ENCODE measurements at regions of chr21 and their contacts with region 1.

Region 1: DNA sequence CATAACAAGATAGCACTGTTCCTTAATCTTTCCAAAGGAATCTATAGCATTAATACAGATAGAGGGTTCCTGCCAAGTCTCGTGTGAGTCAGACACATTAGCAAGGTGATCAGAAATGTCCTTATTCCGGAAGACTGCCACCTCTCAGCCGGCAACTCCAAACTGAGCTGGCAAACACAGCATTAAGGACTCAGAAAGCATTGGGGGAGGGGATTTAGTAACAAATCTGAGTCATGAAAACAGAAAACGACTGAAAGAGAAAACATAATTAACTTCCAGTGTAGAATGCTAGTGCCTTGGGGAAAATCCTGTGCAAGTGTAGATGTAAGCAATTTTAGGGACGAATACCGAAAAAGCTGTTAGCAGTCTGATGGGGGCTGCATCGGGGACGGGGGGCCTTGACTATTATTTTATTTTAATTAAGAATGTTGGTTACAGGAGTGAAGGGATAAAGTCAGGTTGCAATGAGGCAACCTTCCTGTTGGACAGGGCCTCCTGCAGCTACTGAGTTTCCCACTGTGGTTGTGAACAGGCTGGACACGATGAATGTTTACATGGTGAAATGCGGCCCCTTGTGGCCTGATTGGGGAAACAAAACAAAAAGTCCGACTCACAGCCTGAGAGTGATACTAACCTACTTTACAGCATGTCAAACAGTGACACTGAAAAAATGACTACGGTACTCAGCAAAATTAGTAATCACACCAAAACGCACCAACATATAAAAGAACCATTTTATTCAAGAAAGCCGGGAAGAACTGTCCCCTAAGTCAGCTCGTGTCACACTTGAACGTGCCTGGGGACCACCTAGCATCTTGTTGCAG is 20.7 kb downstream of the MIS18A start:
- DNase-seq: no peak
- ATAC-seq: peak; percentile 93
- H3K4me3 ChIP-seq: no peak overlapping the region
- H3K27ac ChIP-seq: no peak overlapping the region
- H3K4me1 ChIP-seq: no peaks in the 10 kb centered on the region
- H3K27me3 ChIP-seq: no peaks in the 10 kb centered on the region
- CTCF ChIP-seq: peak; percentile 62 to 90 (median 78); a peak in 5 of 6 replicates
- EP300 ChIP-seq: no peak
- POLR2A ChIP-seq: no peak
- RAD21 ChIP-seq: peak; percentile 92

Region 2: DNA sequence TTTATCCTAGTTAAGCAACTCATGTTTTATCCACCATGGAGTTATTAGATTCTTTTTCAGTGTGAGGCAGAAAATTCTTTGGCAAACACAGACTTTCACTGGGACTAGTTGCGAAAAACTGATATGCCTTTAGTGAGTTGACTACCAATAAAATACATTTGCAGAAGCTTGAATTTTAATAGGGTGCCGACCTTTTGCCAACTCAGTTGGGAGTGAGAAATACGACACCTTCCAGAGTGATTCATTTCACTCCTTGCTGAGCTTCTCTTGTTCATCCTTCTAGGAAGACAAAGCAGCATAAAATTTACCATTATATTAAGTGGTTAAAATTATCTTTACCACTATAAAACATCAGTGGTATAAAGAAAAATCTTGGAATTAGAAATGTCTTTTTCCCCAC is 1908.6 kb before region 1 on chr21:
- CTCF ChIA-PET with region 1: no interaction called
- POLR2A ChIA-PET with region 1: no interaction called
- RAD21 ChIA-PET with region 1: no interaction called
- SMC1A ChIA-PET with region 1: no interaction called
- in situ Hi-C with region 1: no loop called
- intact Hi-C with region 1: no loop called
- DNase-seq: no peak
- ATAC-seq: no peak
- H3K4me3 ChIP-seq: no peak overlapping the region
- H3K27ac ChIP-seq: no peak overlapping the region
- H3K4me1 ChIP-seq: no peaks in the 10 kb centered on the region
- H3K27me3 ChIP-seq: no peaks in the 10 kb centered on the region
- CTCF ChIP-seq: no peak
- EP300 ChIP-seq: no peak
- POLR2A ChIP-seq: no peak
- RAD21 ChIP-seq: no peak

Region 3: DNA sequence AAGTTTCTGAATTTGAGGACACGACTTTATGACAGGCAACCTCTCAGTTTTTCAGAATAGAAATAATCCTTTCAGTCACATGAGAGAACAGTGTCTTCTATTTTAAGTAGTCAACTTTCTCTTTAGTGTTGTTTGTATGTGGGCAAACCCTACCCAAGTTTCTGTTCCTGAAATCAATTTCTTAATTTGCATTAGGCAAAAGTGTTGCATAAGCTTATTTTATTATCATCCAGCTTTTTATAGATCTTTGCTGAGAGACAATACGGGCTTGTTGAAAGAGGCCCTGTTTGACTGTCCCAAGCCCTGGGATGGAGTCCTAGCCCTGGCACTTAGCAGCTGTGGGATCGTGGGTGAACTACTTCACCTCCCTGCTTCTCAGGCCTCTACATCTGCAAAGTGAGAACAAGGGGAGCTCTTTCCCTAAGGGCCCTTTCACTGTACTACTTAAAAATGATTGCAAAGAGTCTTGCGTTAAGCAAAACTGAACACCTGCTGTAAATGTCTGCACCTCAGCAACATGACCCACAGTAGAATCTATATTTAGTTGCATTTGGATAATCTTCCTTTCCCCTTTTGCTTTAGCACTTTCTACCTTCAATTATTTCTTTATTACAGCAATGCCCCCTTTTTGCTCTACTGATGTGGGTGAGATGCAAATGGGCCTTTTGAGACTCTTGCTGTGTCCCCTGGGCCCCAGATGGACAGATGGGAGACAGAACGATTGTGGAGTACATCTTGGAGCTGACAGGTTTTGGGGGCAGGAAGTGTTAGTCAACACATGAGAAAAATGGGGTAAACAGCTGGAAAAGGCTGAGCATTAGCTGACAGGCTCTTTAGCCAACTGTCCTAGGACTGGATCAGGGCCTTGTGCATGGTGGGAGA is 485.3 kb before region 1 on chr21:
- CTCF ChIA-PET with region 1: interaction called, 3 read pairs
- POLR2A ChIA-PET with region 1: no interaction called
- RAD21 ChIA-PET with region 1: interaction called, 4 read pairs
- SMC1A ChIA-PET with region 1: interaction called, 3 read pairs
- in situ Hi-C with region 1: loop called (anchors 10 kb)
- intact Hi-C with region 1: no loop called
- DNase-seq: peak; percentile 63
- ATAC-seq: peak; percentile 93
- H3K4me3 ChIP-seq: no peak overlapping the region
- H3K27ac ChIP-seq: peak overlapping the region; percentile 62
- H3K4me1 ChIP-seq: peaks cover 15% of the 10 kb centered on the region
- H3K27me3 ChIP-seq: no peaks in the 10 kb centered on the region
- CTCF ChIP-seq: no peak
- EP300 ChIP-seq: peak in 1 of 2 experiments; percentile 63; a peak in 1 of 4 replicates
- POLR2A ChIP-seq: no peak
- RAD21 ChIP-seq: no peak

Region 4: DNA sequence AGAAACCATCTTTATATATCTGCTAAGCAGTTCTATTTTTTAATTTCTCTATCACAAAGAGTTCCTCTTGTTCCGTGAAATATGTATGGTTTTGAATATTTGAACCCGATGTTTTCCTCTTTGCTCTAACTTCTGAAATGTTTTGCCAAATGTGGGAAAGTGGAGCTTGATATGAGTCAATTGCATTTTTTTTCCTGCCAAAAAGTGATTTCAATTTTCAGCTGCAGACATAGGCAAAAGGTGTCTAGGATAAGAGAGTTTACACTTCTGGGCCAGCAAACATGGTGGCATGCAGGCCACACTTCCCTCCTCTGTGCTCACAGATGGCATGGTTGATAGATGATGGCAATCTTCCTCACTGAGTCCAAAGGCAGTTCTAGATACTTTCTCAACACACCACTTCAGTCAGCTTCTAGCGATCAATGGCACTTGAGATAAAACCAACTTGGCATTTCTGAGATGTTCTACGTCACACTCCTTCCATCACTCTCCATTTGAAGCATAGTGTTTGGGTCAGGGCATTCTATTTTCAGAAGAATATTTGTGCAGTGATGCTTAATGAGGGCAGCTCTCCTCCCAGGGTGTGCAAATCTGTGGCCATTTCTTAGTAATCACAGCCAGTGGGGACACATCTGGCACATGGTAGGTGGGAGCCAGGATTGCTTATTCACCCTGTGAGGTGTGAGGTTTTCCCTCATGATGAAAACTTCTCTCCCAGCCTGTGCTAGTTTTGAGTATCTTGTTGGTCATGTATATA is 471.8 kb before region 1 on chr21:
- CTCF ChIA-PET with region 1: interaction called, 13 read pairs
- POLR2A ChIA-PET with region 1: no interaction called
- RAD21 ChIA-PET with region 1: interaction called, 6 read pairs
- SMC1A ChIA-PET with region 1: interaction called, 14 read pairs
- in situ Hi-C with region 1: no loop called
- intact Hi-C with region 1: loop called (anchors 1 kb)
- DNase-seq: no peak
- ATAC-seq: no peak
- H3K4me3 ChIP-seq: no peak overlapping the region
- H3K27ac ChIP-seq: no peak overlapping the region
- H3K4me1 ChIP-seq: no peaks in the 10 kb centered on the region
- H3K27me3 ChIP-seq: no peaks in the 10 kb centered on the region
- CTCF ChIP-seq: no peak
- EP300 ChIP-seq: no peak
- POLR2A ChIP-seq: no peak
- RAD21 ChIP-seq: no peak

Region 5: GRCh38 chr21:31866077-31866511 is 392.1 kb before region 1 on chr21:
- CTCF ChIA-PET with region 1: interaction called, 27 read pairs
- POLR2A ChIA-PET with region 1: no interaction called
- RAD21 ChIA-PET with region 1: interaction called, 3 read pairs
- SMC1A ChIA-PET with region 1: interaction called, 7 read pairs
- in situ Hi-C with region 1: loop called (anchors 5 kb)
- intact Hi-C with region 1: loop called (anchors 1 kb)
- DNase-seq: no peak
- ATAC-seq: peak; percentile 95
- H3K4me3 ChIP-seq: no peak overlapping the region
- H3K27ac ChIP-seq: no peak overlapping the region
- H3K4me1 ChIP-seq: no peaks in the 10 kb centered on the region
- H3K27me3 ChIP-seq: 0 out of 4 replicates have a peak, but pooled peaks cover 0 to 7% of the 10 kb centered on the region in 2 experiments
- CTCF ChIP-seq: peak; percentile 66 to 79 (median 76)
- EP300 ChIP-seq: no peak
- POLR2A ChIP-seq: no peak
- RAD21 ChIP-seq: peak; percentile 72

Region 6: DNA sequence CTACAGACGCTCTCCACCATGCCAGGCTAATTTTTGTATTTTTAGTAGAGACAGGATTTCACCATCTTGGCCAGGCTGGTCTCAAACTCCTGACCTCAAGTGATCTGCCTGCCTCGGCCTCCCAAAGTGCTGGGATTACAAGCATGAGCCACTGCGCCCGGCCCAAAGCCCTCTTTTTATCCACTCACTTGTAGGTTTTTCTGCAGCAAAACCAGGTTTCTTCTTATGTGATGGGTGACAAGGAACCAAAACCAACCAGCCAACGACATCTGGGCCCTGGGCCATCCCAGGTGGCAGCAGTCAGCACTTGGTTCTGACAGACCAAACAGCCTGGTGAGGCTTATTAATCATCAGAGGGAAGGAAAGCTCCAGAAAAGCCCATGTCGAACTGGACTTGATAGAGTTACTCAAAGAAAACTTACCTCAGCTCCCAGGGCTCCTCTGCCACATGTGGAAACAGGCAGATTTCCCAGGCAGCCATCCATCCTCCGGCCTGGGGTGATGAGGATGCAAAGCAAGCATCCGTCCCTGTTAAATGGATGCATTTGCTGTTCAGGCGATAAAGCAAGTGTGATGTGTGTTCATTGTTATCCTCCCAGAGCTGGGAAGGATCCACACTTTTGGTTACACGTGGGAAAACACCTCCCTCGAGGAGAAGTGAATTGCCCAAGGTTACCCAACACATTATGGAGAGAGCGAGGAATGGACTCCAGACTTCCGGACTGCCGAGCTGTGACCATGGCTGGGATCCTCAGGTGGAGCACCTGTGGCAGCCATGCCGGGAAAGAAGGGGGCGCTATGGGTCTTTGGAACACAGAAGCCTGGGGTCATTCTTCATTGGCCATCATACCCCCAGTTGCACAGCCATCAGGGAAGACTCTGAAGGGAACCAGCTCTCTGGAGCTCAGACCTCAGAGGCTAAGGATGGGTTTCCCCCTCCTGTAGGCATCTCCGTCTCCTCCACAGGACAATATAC is 266.5 kb before region 1 on chr21:
- CTCF ChIA-PET with region 1: no interaction called
- POLR2A ChIA-PET with region 1: no interaction called
- RAD21 ChIA-PET with region 1: no interaction called
- SMC1A ChIA-PET with region 1: no interaction called
- in situ Hi-C with region 1: no loop called
- intact Hi-C with region 1: loop called (anchors 1 kb)
- DNase-seq: no peak
- ATAC-seq: no peak
- H3K4me3 ChIP-seq: no peak overlapping the region
- H3K27ac ChIP-seq: no peak overlapping the region
- H3K4me1 ChIP-seq: no peaks in the 10 kb centered on the region
- H3K27me3 ChIP-seq: no peaks in the 10 kb centered on the region; a peak in 2 of 4 replicates
- CTCF ChIP-seq: 0 out of 6 replicates have a peak, but pooled peaks of 1 of the 3 experiments have one; percentile 2
- EP300 ChIP-seq: no peak
- POLR2A ChIP-seq: no peak
- RAD21 ChIP-seq: peak; percentile 31; the same call in 1 of the 2 replicates

Region 7: DNA sequence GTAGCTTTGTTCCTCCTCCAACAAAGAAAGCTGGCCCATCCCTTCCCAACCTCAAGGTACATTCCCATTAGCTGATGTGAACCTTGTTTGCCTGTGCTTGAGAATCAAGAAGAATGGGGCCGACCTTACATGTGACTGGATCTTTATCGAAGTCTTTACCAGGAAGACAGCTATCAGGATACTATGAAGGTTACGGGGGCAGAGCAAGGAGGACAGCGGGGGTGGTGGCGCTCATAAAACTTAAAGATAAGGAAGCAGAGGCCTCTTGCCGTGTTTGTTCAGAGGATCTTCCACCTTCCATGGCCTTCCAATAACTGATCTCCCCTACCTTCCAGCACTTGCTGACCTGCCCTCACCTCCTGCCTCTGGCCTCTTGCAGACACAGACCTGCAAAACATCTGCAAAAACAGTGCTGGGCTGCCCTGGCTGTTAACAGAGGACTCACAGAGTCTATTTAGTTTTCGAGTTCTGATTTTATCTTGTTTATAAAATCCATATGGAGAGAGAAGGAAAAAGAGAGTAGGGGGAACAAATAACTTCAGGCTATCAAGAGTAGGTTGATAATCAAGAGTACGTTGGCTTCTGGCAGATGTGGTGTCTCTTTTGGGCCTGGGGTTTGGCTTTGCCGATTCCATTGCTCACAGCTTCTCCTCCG is 187.4 kb before region 1 on chr21:
- CTCF ChIA-PET with region 1: no interaction called
- POLR2A ChIA-PET with region 1: no interaction called
- RAD21 ChIA-PET with region 1: no interaction called
- SMC1A ChIA-PET with region 1: no interaction called
- in situ Hi-C with region 1: no loop called
- intact Hi-C with region 1: loop called (anchors 10 kb)
- DNase-seq: no peak
- ATAC-seq: no peak
- H3K4me3 ChIP-seq: no peak overlapping the region
- H3K27ac ChIP-seq: no peak overlapping the region
- H3K4me1 ChIP-seq: no peaks in the 10 kb centered on the region
- H3K27me3 ChIP-seq: no peaks in the 10 kb centered on the region
- CTCF ChIP-seq: no peak
- EP300 ChIP-seq: no peak
- POLR2A ChIP-seq: no peak
- RAD21 ChIP-seq: no peak

Region 8: DNA sequence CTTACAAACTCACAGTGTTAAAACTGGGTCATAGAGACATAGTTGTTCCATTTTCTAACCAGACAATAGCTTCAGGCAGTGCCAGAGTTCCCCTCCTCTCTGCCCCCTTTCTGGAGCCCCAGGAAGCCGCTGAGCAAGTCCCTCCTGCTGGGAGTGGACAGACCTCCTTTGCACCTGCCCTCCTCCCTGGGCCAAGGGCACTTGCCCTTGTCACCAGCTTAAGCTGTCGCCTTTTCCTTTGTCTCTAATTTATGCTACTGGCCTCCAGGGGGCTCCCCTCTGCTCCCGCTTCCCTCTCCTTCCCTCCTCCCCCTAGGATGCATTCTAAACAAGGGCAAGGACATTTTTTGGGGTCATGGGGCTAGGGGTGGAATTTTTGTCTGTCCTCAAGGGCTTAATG is 161.8 kb before region 1 on chr21:
- CTCF ChIA-PET with region 1: interaction called, 15 read pairs
- POLR2A ChIA-PET with region 1: no interaction called
- RAD21 ChIA-PET with region 1: interaction called, 5 read pairs
- SMC1A ChIA-PET with region 1: interaction called, 3 read pairs
- in situ Hi-C with region 1: no loop called
- intact Hi-C with region 1: no loop called
- DNase-seq: no peak
- ATAC-seq: 0 out of 3 replicates have a peak, but pooled peaks have one; percentile 27
- H3K4me3 ChIP-seq: no peak overlapping the region
- H3K27ac ChIP-seq: no peak overlapping the region
- H3K4me1 ChIP-seq: no peaks in the 10 kb centered on the region
- H3K27me3 ChIP-seq: no peaks in the 10 kb centered on the region
- CTCF ChIP-seq: peak; percentile 13 to 36 (median 28); a peak in 4 of 6 replicates
- EP300 ChIP-seq: no peak
- POLR2A ChIP-seq: no peak
- RAD21 ChIP-seq: peak; percentile 21; the same call in 1 of the 2 replicates

Region 9: DNA sequence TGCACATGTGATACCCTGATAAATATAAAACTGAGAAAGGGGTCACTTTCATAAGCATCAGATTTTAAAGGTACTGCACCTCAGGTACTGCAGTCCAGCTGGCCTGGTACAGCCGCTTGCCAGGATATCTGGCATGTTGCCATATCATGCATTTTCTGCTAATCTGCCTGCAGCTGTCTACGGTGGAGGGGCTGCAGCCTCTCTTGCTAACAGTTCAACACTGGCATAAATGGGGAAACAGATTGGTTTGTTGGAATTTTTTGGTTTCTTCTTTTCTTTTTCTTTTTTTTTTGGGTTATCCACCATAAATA is 50.8 kb before region 1 on chr21:
- CTCF ChIA-PET with region 1: no interaction called
- POLR2A ChIA-PET with region 1: no interaction called
- RAD21 ChIA-PET with region 1: no interaction called
- SMC1A ChIA-PET with region 1: no interaction called
- in situ Hi-C with region 1: no loop called
- intact Hi-C with region 1: no loop called
- DNase-seq: no peak
- ATAC-seq: no peak
- H3K4me3 ChIP-seq: no peak overlapping the region
- H3K27ac ChIP-seq: no peak overlapping the region
- H3K4me1 ChIP-seq: no peaks in the 10 kb centered on the region
- H3K27me3 ChIP-seq: no peaks in the 10 kb centered on the region
- CTCF ChIP-seq: no peak
- EP300 ChIP-seq: no peak
- POLR2A ChIP-seq: no peak
- RAD21 ChIP-seq: no peak